ENCODE measurements at regions of chr1 and their contacts with region 1.

Region 1: DNA sequence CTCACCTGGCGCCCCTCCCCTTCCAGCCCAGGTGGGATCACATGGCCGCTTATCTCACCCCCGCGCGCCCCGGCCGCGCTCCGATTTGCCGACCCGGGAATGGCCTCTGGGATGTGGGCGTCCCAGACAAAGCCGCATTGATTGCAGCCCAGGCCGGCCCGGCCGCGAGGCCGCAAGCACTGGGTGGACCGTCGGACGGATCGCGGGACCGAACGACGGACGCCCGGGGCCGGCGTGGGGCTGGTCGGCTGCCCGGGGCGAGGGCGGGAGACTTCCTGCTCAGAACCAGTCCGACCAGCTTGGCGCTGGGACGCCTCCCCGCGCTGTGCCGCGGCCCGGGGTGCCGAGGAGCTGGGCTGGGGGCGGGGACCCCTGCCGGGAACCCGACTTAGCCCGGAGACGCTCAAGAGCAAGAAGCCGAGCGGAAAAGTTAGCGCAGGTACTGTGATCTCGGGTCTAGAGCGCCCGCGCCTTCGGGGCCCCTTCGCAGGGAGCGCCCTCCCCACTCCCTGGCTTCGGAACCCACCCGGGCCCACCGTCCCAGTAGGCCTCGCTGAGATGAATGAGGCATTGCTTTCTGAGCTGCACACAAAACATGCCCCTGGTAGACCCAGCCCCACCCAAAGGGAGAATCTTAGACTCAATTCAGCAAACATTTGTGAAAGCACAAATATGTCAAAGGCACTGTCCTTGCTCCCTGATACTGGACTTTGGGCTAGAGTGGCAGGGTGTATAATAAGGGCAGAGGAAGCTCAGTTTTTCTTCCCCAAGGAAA is 415 bp upstream of the LAD1 start:
- DNase-seq: peak; percentile 70 to 79
- H3K4me3 ChIP-seq: peak overlapping the region; percentile 96
- H3K27ac ChIP-seq: peak overlapping the region; percentile 61
- H3K4me1 ChIP-seq: peaks cover 42% of the 10 kb centered on the region
- H3K27me3 ChIP-seq: no peaks in the 10 kb centered on the region
- CTCF ChIP-seq: no peak

Region 2: DNA sequence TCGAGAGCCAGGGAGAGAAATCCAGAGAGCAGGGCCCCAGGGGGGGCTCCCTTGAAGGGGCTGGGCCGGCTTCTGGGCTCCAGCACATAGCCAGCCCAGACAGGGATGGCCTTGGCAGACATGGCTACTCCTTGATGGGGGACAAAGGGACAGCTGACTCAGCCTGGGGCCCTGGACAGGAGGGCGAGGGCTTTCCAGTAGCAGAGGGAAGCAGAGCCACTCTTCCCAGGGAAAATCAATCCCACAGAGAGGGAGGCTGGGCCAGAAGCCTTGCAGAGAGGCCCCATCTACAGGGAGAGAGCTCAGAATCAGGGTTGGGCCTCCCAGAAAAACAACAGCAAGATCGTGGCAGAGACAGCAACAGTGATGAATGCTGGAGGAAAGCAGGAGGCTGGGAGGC is 193.4 kb before region 1 on chr1:
- CTCF ChIA-PET with region 1: no interaction called
- POLR2A ChIA-PET with region 1: no interaction called
- intact Hi-C with region 1: no loop called
- DNase-seq: no peak
- H3K4me3 ChIP-seq: no peak overlapping the region
- H3K27ac ChIP-seq: no peak overlapping the region
- H3K4me1 ChIP-seq: no peaks in the 10 kb centered on the region
- H3K27me3 ChIP-seq: no peaks in the 10 kb centered on the region
- CTCF ChIP-seq: no peak

Region 3: DNA sequence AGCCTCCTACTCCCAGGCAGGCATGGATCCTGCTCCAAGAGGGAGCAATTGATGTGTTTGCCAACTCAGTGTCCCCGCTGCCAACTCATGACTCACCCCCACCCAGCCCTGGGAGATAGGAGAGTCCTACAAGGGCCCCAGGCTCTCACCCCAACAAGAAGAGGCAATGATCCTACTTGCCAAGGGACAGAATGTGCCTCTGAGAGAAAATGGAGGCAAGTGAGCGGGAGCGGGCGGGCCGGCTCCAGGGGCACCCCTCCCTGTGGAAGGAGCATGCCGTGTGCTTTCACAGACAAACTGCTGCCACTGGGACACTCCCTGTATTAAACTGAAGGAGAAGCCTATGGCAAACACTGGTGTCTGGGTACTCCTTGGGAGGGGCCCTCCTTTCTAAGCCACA is 99.6 kb before region 1 on chr1:
- CTCF ChIA-PET with region 1: no interaction called
- POLR2A ChIA-PET with region 1: interaction called, 9 read pairs
- intact Hi-C with region 1: loop called (anchors 5 kb)
- DNase-seq: peak; percentile 73 to 77
- H3K4me3 ChIP-seq: no peak overlapping the region
- H3K27ac ChIP-seq: no peak overlapping the region
- H3K4me1 ChIP-seq: peaks cover 34% of the 10 kb centered on the region
- H3K27me3 ChIP-seq: no peaks in the 10 kb centered on the region
- CTCF ChIP-seq: no peak

Region 4: DNA sequence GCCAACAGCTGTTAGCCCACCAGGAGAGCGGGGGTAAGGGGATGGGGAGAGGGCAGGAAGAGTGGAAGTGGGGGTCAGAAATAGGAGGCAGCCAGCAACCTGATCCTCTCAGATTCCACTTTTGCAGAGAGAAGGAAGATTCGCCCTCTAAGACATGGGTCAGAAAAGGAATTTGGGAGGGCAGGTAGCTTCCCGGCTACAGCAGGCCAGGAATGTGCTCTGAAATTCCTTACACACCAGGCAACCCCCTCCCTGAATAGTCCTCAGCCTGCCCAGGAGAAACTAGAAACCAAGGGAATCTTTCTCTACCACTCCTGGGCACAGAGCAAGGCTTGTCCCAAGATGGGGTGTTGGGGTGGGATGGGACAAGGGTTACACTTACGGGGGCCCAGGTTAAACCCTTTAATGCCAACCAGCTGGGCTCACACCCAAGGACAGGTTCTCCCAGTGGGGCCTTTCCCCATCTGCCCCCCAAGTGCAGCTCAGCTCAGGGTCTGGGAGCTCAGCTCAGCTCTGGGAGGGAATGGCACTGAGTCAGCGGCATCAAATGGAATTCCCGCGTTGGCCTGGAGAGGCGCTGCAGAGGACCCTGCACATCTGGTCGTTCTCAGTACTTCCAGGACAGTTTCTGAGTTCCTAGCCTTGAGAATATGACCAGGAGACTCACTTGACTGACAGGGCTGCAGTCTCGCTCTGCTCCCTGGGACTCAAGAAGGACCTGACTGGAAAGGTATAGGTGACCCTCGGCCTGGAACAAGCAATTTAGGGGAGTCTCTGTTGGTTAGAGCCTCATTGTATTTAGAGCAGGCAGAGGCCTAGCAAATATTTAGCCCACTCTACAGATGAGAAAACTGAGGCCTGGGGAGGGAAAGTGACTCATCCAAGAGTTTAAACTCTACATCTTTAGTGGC is 22.8 kb before region 1 on chr1:
- CTCF ChIA-PET with region 1: interaction called, 3 read pairs
- POLR2A ChIA-PET with region 1: no interaction called
- intact Hi-C with region 1: loop called (anchors 2 kb)
- DNase-seq: peak in 1 of 2 experiments; percentile 63
- H3K4me3 ChIP-seq: no peak overlapping the region
- H3K27ac ChIP-seq: no peak overlapping the region
- H3K4me1 ChIP-seq: peaks cover 7% of the 10 kb centered on the region; the same call in 1 of the 2 replicates
- H3K27me3 ChIP-seq: peaks cover 42% of the 10 kb centered on the region
- CTCF ChIP-seq: peak; percentile 83

Region 5: DNA sequence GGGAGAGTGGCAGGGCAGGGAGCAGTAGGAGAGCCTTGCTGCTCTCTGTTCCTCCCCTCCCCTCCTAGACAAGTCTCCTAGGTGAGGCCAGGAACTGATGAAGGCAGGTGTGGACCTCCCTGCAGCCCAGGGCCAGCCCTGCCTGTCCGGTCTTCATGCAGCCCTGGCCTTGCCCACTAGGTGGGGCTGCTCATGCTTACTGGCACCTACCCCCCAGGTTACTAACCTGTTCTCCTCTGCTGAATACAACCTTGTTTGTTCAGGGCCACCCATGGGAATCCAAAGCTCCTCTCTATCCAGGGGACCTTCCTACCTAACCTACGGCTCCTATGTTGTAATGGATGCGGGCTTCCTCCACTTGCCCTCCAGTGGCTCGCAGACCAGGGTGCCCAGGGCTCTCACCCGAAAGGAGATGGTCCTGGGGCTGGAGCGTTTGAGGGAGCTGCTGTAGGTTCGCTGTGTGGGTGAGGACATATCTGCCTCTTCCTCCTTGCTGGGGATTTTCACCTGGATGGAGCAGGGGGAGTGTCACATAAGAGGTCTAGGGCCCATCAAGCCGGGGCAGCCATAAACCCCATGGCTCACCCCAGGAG is 14.1 kb before region 1 on chr1:
- CTCF ChIA-PET with region 1: interaction called, 15 read pairs
- POLR2A ChIA-PET with region 1: no interaction called
- intact Hi-C with region 1: loop called (anchors 1 kb)
- DNase-seq: peak; percentile 62 to 82
- H3K4me3 ChIP-seq: no peak overlapping the region
- H3K27ac ChIP-seq: no peak overlapping the region
- H3K4me1 ChIP-seq: peaks cover 14% of the 10 kb centered on the region; the same call in 1 of the 2 replicates
- H3K27me3 ChIP-seq: no peaks in the 10 kb centered on the region
- CTCF ChIP-seq: peak; percentile 87

Region 6: GRCh38 chr1:201456499-201457309 is 57.2 kb after region 1 on chr1:
- CTCF ChIA-PET with region 1: no interaction called
- POLR2A ChIA-PET with region 1: no interaction called
- intact Hi-C with region 1: loop called (anchors 5 kb)
- DNase-seq: peak; percentile 76 to 96
- H3K4me3 ChIP-seq: no peak overlapping the region
- H3K27ac ChIP-seq: peak overlapping the region; percentile 95
- H3K4me1 ChIP-seq: peaks cover 56% of the 10 kb centered on the region
- H3K27me3 ChIP-seq: no peaks in the 10 kb centered on the region
- CTCF ChIP-seq: no peak

Measured in PC-9 (cell line).